ENCODE measurements at regions of chr16 and their contacts with region 1.

Region 1: DNA sequence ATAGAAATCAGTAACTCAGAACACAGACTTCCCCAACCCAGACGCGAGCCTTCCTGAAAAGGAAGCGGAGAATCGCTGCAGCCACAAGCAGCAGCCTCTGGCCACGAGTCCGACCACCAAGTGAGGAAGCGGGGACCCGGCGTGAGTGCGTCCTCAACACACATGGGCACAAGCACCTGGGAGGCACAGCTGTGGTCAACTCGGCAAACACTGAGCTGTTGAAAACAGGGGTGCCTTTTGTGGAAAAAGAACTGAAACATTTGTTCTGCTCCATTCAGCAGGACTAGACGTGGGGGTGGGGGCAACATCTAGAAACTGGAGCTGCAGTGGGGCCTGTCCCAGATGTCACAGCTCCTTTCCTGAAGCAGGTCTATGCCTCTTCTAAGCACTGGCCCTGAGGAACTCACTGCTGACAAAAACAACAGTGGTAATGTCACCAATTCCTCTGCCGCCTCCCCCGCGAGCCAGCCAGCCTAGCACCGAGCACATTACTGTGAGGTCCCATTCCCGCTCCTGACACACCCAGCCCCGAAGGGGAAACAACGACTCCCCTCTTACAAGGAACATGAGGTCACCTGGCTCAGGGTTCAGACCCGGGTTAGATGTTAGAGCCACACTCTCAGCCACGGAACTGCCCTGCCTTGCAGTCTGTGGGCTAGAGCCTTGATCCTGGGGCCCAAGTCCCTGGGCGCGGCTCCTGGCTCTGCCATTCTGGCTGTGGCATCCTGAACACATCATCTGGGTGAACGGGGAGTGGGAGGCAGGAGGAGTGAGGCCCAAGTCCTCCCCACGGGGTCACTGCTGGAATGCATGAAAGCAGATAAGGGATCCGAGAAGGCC is 29.0 kb downstream of the KDM8 start:
- DNase-seq: peak in 1 of 5 donors; percentile 34
- H3K4me3 ChIP-seq: no peak overlapping the region
- H3K27ac ChIP-seq: no peak overlapping the region
- H3K4me1 ChIP-seq: peaks cover 2% of the 10 kb centered on the region
- H3K27me3 ChIP-seq: no peaks in the 10 kb centered on the region
- CTCF ChIP-seq: no peak
- EP300 ChIP-seq: no peak
- POLR2A ChIP-seq: no peak

Region 2: DNA sequence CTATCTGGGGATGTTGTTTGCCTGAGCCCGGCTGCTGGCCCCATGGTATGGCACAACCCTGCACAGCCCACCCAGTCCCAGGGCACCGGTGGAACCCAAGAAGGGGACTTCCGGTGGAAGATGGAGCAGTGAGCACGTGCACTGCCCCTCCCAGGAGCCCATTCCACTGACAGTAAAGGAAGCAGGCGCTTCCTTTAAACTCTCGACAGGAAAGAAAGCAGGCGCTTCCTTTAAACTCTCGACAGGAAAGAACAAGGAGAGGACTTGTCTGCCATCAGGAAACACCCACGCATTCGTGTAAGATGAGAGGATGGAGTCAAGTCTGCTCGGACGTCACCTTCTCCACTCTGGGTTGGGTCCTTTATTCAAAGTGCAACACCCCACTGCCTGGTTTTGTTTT is 223.4 kb after region 1 on chr16:
- intact Hi-C with region 1: loop called in 1 of 4 experiments (anchors 5 kb)
- DNase-seq: no peak
- H3K4me3 ChIP-seq: no peak overlapping the region
- H3K27ac ChIP-seq: no peak overlapping the region
- H3K4me1 ChIP-seq: no peaks in the 10 kb centered on the region
- H3K27me3 ChIP-seq: no peaks in the 10 kb centered on the region
- CTCF ChIP-seq: no peak
- EP300 ChIP-seq: no peak
- POLR2A ChIP-seq: no peak